HAP-1 (cell line): ENCODE measurements at regions of chrX and their contacts with region 1.

Region 1: DNA sequence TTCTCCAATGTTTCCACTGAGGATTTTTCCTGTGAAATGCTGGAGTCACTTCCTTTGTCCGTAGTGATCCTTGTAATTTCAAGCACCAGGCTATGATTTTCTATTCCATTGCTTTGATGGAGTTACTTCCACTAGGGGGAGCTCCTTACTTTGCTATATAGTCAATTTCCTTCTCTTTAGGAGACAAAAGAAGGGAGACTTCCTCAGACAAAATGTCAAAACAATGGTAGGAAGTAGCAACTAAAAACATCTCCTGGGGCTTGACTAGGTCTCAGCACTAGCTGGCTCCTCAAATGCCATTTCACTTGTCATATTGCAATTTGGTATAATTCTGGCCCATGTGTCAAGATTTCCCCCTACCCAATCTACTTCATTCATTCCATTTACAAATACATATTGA is 24.1 kb downstream of the ZCCHC12 start:
- DNase-seq: peak; percentile 34 to 80
- H3K4me3 ChIP-seq: no peak overlapping the region
- H3K4me1 ChIP-seq: no peaks in the 10 kb centered on the region
- H3K27me3 ChIP-seq: no peaks in the 10 kb centered on the region

Region 2: GRCh38 chrX:119067023-119067739 is 219.5 kb after region 1 on chrX:
- in situ Hi-C with region 1: loop called (anchors 5 kb)
- DNase-seq: peak; percentile 43 to 75
- H3K4me3 ChIP-seq: no peak overlapping the region
- H3K4me1 ChIP-seq: no peaks in the 10 kb centered on the region
- H3K27me3 ChIP-seq: no peaks in the 10 kb centered on the region